AG04449 (cell line): ENCODE measurements at regions of chr1 and their contacts with region 1.

Region 1: DNA sequence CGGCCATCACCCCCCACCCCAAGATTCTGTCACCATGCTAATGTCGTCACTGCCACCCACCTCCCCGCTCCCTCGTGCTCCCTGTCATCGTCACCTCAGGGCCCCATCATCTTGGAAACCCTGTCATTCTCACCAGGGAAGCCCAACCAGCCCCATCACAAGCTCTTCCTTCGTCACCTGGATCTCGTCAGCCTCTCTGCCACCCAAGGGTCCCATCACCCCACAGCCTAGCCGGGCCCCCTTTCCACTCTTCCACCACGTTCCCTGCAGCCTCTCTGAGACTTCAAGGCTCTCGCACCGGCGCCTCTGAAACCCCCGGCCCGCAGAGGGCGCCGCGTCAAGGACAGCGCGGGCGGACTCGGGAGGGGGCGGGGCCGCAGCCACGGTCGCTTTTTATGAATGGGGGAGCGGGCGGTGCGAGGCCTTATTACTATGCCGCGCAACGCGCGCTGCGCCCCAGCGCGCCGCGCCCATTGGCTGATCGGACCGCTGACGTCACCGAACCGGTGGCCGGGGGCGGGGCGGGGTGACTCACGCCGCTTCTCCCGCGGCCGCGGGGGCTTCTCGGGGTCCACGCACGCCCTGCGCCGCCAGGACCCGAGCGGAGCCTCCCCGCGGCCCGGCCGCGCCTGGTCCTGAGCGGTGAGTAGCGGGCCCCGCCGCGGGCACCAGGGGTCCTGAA is at the start of gene GPR3:
- DNase-seq: no peak
- H3K4me3 ChIP-seq: peak within 1 kb of the TSS; percentile 71
- CTCF ChIP-seq: peak; percentile 83

Region 2: GRCh38 chr1:27102707-27103491 is 289.3 kb before region 1 on chr1:
- CTCF ChIA-PET with region 1: interaction called, 21 read pairs
- POLR2A ChIA-PET with region 1: no interaction called
- DNase-seq: no peak
- H3K4me3 ChIP-seq: no peak overlapping the region
- CTCF ChIP-seq: peak; percentile 94

Region 3: DNA sequence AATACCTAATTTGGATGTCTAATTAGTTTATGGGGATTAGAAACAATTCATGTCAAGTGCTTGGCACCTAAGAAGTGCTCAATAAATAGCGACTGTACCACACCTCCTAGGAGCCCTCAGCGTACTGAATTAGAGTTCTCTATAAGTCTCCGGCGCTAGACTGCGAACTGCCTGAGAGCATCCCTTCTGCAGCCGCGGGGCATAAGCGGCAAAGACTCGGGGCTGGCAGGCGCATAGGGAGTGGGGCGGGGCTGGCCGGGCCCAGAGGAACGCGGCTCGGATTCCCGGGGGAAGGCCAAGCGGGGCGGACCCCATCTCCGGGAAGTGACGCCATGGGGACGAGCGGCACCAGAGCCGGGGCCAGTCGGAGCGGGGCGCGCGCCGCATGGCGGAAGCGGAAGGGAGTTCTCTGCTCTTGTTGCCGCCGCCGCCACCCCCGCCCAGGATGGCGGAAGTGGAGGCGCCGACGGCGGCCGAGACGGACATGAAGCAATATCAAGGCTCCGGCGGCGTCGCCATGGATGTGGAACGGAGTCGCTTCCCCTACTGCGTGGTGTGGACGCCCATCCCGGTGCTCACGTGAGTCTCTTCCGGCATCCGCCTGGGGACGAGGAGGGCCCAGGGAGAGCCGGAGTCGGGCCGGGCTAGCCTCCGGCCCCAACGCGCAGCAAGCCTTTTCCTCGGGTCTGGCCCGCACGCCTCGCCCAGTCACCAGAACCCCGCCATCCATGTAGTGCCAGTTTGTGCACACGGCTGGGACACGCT is 70.2 kb before region 1 on chr1 and contains the start of gene TMEM222:
- CTCF ChIA-PET with region 1: interaction called, 18 read pairs
- POLR2A ChIA-PET with region 1: no interaction called
- DNase-seq: peak; percentile 71
- H3K4me3 ChIP-seq: peak within 1 kb of the TSS; percentile 100
- CTCF ChIP-seq: peak; percentile 14

Region 4: DNA sequence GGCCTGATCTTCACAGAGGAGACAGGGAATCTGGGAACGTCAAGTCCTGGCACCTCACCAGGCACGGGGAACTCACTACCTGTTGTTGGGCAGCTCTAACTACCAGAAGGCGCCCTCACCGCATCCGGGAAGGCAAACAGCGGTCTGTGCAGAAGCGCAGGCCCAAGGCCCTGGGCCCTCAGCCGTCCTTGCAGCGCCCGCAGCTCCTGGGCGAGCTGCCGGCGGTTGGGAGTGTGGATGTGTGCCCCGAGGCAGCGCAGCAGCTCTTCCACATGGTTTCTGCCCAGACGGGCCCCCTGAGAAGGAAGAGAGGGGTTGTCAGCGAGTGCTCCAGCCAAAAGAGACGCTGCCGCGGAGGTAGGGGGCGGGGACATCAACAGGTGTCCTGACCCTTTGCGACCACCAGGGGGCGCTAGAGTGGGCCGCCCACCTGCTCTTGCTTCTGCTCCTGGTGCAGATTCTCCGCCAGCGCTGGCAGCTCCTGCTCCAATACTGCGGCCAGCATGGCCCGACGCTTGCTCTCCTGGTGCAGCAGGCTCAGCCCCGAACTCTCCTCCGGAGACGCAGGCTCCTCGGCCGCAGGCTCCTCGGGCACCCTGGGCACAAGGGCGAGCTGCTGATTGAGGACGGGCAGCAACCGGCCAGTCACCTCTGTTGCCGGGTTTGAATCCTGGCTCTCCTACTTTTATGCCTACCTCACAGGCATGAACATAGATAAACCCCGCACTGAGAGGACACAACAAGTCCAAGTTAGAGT is 34.8 kb before region 1 on chr1:
- CTCF ChIA-PET with region 1: interaction called, 50 read pairs
- POLR2A ChIA-PET with region 1: no interaction called
- DNase-seq: no peak
- H3K4me3 ChIP-seq: no peak overlapping the region
- CTCF ChIP-seq: peak; percentile 92

Region 5: DNA sequence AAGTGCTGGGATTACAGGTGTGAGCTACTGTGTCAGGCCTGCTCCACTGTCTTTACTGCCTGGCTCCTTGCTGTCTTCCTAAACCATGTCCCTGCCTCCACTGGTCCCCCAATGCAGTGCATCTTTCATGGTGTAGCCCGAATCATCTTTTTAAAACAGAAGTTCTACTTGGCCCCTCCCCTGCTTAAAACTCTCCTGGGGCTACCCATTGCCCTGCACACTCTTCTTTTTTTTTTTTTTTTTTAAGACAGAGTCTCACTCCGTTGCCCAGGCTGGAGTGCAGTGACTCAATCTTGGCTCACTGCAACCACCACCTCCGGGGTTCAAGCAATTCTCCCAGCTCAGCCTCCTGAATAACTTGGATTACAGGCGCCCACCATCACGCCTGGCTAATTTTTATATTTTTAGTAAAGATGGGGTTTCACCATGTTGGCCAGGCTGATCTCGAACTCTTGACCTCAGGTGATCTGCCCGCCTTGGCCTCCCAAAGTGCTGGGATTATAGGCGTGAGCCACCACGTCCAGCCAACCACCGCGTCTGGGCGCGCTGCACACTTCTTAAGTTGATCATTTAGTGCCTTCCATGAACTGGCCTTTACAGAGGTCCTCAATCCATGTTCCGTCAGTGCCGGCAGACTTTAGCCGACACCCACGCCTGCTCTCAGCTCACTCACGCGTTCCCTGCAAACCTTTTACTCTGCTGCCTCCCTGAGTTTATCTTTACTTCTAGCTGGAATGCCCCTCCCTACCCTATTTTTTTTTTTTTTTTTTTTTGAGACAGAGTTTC is 20.0 kb before region 1 on chr1:
- CTCF ChIA-PET with region 1: interaction called, 47 read pairs
- POLR2A ChIA-PET with region 1: no interaction called
- DNase-seq: no peak
- H3K4me3 ChIP-seq: no peak overlapping the region
- CTCF ChIP-seq: no peak

Region 6: DNA sequence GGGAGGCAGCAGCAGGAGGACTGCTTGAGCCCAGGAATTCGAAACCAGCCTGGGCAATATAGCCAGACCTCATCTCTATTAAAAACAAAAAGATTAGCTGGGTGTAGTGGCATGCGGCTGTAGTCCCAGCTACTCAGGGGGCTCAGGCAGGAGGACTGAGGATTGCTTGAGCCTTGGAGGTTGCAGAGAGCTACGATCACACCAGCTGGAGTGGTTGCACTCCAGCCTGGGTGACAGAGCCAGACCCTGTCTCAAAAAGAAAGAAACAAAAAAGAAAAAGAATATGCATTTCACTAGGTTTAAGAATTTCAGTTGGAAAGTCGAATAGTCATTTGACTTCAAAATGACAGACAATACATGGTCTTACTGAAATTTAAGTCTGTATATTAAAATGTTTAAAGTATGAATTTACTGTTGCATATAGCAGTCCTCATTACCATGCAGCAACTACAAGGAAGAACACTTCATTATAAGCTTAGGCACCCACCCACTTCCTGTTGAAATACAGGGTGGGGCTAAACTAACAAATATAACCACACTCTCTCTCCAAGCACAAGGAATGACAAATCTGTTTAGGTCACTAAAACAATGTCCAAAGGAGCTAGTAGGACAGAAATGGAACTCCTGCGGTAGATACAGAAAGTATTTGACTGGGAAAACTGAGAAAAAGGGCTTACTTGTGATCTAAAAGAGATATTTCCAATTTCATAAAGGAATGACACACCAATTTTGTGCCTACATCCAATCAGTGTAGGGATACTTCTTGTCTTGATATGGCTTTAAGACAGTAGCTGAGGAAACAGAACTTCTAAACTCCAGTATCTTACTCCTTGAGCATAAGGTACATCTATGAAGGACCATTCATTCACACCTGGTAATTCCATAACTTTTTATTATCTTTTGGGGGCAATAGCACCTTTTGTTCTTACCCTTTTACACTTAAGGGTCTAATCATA is 44.2 kb after region 1 on chr1:
- CTCF ChIA-PET with region 1: no interaction called
- POLR2A ChIA-PET with region 1: no interaction called
- DNase-seq: peak; percentile 10
- H3K4me3 ChIP-seq: no peak overlapping the region
- CTCF ChIP-seq: no peak

Region 7: DNA sequence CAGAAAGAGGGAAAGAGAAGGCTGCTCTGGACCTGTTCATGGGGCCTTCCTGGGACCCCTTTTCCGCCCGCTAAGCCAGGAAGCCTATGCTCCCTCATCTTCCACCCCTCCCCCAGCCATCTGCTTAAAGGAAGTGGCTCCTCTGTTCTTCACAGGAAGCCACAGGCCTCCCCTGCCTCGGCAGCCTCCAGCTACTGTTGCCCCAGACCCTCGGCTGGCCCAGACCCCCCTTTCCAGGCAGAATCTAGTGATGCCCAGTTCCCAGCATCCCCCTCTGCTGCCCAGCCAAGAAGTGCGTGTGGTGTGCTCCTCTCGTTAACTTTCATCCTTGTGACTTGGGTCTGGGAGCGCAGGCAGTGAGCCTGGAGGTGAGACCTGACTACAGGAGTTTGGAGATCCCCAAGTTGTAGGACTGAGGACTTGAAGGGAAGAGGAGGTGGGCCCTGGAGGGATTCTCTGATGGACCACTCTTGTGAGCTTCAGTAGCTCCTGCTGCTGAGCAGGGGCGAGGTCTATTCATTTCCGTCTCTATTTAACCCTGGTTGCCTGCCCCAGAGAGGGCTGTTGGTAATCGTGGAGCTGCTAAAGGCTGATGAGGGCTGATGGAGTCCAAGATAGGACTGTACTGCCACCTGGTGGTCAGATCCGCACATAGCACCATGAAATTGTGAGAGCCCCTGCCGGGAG is 270.6 kb after region 1 on chr1:
- CTCF ChIA-PET with region 1: interaction called, 23 read pairs
- POLR2A ChIA-PET with region 1: no interaction called
- DNase-seq: no peak
- H3K4me3 ChIP-seq: no peak overlapping the region
- CTCF ChIP-seq: peak; percentile 79